HepG2 (cell line): ENCODE measurements at regions of chr21 and their contacts with region 1.

Region 1: GRCh38 chr21:14864211-14865021 is 200.4 kb downstream of the NRIP1 start:
- DNase-seq: peak; percentile 94
- ATAC-seq: peak; percentile 95
- H3K4me3 ChIP-seq: peak overlapping the region in 2 of 3 experiments; percentile 48 to 53; a peak in 4 of 6 replicates
- H3K27ac ChIP-seq: peak overlapping the region; percentile 76
- H3K4me1 ChIP-seq: peaks cover 54% of the 10 kb centered on the region
- H3K27me3 ChIP-seq: no peaks in the 10 kb centered on the region
- CTCF ChIP-seq: peak; percentile 76
- EP300 ChIP-seq: peak in 1 of 2 experiments; percentile 69; a peak in 2 of 4 replicates
- POLR2A ChIP-seq: no peak
- RAD21 ChIP-seq: peak; percentile 72; the same call in 1 of the 2 replicates

Region 2: GRCh38 chr21:14797543-14797942 is 66.9 kb before region 1 on chr21:
- CTCF ChIA-PET with region 1: no interaction called
- POLR2A ChIA-PET with region 1: no interaction called
- in situ Hi-C with region 1: no loop called
- intact Hi-C with region 1: no loop called
- DNase-seq: no peak
- ATAC-seq: no peak
- H3K4me3 ChIP-seq: no peak overlapping the region
- H3K27ac ChIP-seq: no peak overlapping the region
- H3K4me1 ChIP-seq: no peaks in the 10 kb centered on the region
- H3K27me3 ChIP-seq: no peaks in the 10 kb centered on the region
- CTCF ChIP-seq: no peak
- EP300 ChIP-seq: no peak
- POLR2A ChIP-seq: no peak
- RAD21 ChIP-seq: no peak

Region 3: GRCh38 chr21:14889080-14889810 is 24.8 kb after region 1 on chr21:
- CTCF ChIA-PET with region 1: interaction called, 5 read pairs
- POLR2A ChIA-PET with region 1: interaction called, 17 read pairs
- in situ Hi-C with region 1: no loop called
- intact Hi-C with region 1: loop called (anchors 1 kb)
- DNase-seq: peak; percentile 92
- ATAC-seq: peak; percentile 91
- H3K4me3 ChIP-seq: peak overlapping the region in 1 of 3 experiments; percentile 18; a peak in 1 of 6 replicates
- H3K27ac ChIP-seq: peak overlapping the region; percentile 83
- H3K4me1 ChIP-seq: peaks cover 39% of the 10 kb centered on the region
- H3K27me3 ChIP-seq: no peaks in the 10 kb centered on the region
- CTCF ChIP-seq: no peak
- EP300 ChIP-seq: peak; percentile 97 to 98
- POLR2A ChIP-seq: no peak
- RAD21 ChIP-seq: 0 out of 2 replicates have a peak, but pooled peaks have one; percentile 31

Region 4: DNA sequence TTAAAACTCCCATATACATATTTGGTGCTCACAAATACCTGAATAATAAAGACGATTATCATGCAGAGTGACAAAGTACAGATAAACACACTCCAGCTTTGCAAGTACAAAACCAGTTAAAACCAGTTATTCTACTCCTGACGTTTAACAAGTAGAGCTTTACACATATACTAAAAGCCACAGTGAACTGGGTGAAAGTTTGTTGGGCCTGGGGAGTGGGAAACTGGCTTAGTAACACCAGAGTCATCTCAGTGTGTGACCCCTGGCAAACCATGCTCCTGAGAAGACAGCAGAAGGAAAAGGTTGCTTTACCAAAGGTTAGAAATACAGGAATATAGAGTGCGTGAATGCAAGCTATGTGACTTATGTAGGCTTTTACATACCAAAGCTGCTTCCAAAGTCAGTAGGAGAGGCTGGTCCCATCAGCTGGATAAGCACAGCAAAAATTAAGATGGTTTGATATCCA is 52.3 kb after region 1 on chr21:
- CTCF ChIA-PET with region 1: no interaction called
- POLR2A ChIA-PET with region 1: no interaction called
- in situ Hi-C with region 1: no loop called
- intact Hi-C with region 1: no loop called
- DNase-seq: no peak
- ATAC-seq: no peak
- H3K4me3 ChIP-seq: no peak overlapping the region
- H3K27ac ChIP-seq: no peak overlapping the region
- H3K4me1 ChIP-seq: 0 out of 2 replicates have a peak, but pooled peaks cover 8% of the 10 kb centered on the region
- H3K27me3 ChIP-seq: no peaks in the 10 kb centered on the region
- CTCF ChIP-seq: no peak
- EP300 ChIP-seq: no peak
- POLR2A ChIP-seq: no peak
- RAD21 ChIP-seq: no peak

Region 5: GRCh38 chr21:15001857-15002606 is 137.6 kb after region 1 on chr21:
- CTCF ChIA-PET with region 1: no interaction called
- POLR2A ChIA-PET with region 1: no interaction called
- in situ Hi-C with region 1: no loop called
- intact Hi-C with region 1: loop called (anchors 5 kb)
- DNase-seq: no peak
- ATAC-seq: no peak
- H3K4me3 ChIP-seq: no peak overlapping the region
- H3K27ac ChIP-seq: no peak overlapping the region
- H3K4me1 ChIP-seq: peaks cover 97% of the 10 kb centered on the region
- H3K27me3 ChIP-seq: no peaks in the 10 kb centered on the region
- CTCF ChIP-seq: no peak
- EP300 ChIP-seq: no peak
- POLR2A ChIP-seq: no peak
- RAD21 ChIP-seq: no peak

Region 6: DNA sequence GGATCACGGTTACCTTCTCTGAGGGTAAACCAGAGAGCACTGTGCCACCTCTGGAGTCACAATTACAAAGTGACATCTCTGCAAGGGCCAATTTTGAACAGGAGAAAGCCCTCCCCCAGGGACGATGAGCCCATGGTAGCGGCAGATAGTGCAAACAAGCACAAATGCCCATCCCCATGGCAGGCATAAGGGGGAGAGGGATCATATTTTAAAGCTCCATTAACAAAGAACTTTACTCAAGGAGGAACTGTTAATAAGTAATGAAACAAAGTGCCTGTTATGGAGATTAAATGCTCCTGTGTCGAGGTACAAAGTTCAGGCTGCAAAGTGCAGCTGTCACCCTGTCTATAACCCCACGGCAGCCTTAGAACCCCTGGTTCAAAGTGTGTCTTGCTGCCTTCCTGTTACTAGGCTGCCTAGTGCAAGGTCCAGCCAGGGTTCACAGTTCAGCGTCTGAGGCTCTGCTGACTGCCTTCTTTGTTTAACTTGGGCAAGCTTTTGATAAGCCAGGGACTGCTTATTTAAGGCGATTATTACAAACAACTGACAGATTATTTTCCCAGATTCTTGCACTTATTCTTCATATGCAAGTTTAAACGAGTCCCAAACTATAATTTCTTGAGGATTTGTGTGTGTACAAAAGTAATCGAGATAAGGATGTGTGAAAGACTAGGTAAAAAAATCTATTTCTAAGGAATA is 276.1 kb after region 1 on chr21:
- CTCF ChIA-PET with region 1: interaction called, 3 read pairs
- POLR2A ChIA-PET with region 1: interaction called, 15 read pairs
- in situ Hi-C with region 1: no loop called
- intact Hi-C with region 1: loop called (anchors 1 kb)
- DNase-seq: peak; percentile 99
- ATAC-seq: peak; percentile 96
- H3K4me3 ChIP-seq: peak overlapping the region in 2 of 3 experiments; percentile 7 to 26; a peak in 3 of 6 replicates
- H3K27ac ChIP-seq: peak overlapping the region; percentile 90
- H3K4me1 ChIP-seq: peaks cover 50% of the 10 kb centered on the region
- H3K27me3 ChIP-seq: no peaks in the 10 kb centered on the region
- CTCF ChIP-seq: no peak; the same call in 1 of the 2 replicates
- EP300 ChIP-seq: peak; percentile 94 to 99
- POLR2A ChIP-seq: peak; percentile 42 to 61; a peak in 1 of 4 replicates
- RAD21 ChIP-seq: peak; percentile 61

Region 7: DNA sequence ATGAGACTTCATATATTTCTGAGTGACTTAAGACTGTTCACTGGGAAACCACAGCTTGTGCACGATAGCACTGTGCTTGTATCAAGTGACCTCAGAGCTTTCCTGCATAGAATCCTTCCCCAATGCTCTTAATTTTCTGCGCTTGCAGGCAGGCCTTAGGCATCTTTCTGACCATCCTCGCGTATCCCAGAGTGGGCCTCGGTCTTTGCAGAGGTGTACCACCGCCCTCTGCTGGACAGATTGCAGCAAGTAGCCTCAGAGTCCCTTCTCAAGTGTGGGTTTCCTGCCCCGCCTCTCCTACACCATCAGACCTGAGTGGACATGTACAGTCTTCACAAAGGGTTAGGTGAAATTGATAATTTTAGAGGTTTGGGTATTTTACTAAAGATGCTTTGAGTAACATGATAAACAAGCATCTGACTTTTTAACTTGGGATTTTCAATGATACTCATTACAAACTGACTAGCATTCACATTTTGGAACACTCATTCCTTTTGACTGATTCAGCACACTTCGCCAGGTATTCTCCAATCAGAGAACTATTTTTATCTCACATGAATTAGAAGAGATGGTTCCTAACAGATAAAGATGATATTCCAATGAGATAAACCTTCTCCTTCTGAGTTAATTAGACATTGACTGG is 618.8 kb after region 1 on chr21:
- CTCF ChIA-PET with region 1: interaction called, 10 read pairs
- POLR2A ChIA-PET with region 1: no interaction called
- in situ Hi-C with region 1: loop called (anchors 25 kb)
- intact Hi-C with region 1: loop called (anchors 1 kb)
- DNase-seq: peak; percentile 82
- ATAC-seq: peak; percentile 100
- H3K4me3 ChIP-seq: no peak overlapping the region
- H3K27ac ChIP-seq: no peak overlapping the region
- H3K4me1 ChIP-seq: peaks cover 25% of the 10 kb centered on the region
- H3K27me3 ChIP-seq: no peaks in the 10 kb centered on the region
- CTCF ChIP-seq: peak; percentile 97
- EP300 ChIP-seq: no peak
- POLR2A ChIP-seq: no peak
- RAD21 ChIP-seq: peak; percentile 96